CD8-positive, alpha-beta memory T cell (primary cell): ENCODE measurements at regions of chr6 and their contacts with region 1.

Region 1: DNA sequence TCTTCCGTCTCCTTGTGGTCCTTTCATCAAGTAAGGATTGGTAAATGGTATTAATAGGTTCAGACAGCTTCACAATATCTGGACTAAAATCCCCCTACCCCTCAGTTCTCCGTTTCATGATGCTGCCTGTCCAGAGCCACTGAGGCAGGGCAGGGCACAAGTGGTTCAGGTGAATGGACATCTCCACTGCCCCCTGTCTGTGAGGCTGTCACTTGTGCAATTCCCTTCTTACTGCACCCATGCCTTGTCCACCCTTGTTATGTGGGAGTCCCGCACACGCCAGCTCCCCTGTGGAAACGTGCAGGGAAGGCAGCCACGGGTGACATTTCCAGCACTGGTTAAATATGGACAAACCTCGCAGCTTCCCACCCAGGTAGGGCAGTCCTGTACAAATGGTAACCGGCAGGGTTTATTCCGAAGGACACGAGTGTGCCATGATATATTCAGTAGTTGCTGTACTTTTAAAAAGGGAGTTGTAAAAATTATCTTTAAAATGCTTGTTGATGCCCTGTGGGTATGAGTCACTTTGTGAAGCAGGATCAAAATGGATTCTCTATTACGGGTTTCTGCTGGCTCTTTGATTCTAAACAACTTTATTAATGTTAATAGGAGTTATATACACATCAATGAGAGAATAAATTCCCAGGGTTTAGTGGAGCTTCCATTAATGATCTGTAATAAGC is 73.5 kb downstream of the FYN start:
- DNase-seq: no peak
- H3K4me3 ChIP-seq: no peak overlapping the region
- H3K4me3 Mint-ChIP-seq: peak overlapping the region in 3 of 7 donors; percentile 7 to 65 (median 28)
- H3K27ac ChIP-seq: no peak overlapping the region
- H3K27ac Mint-ChIP-seq: peak overlapping the region in 5 of 8 donors; percentile 8 to 79 (median 54)
- H3K4me1 ChIP-seq: peaks cover 56% of the 10 kb centered on the region
- H3K4me1 Mint-ChIP-seq: peaks cover 62 to 92% (median 76%) of the 10 kb centered on the region in 3 donors
- H3K27me3 ChIP-seq: no peaks in the 10 kb centered on the region
- H3K27me3 Mint-ChIP-seq: peaks cover 0 to 2% of the 10 kb centered on the region in 2 donors

Region 2: DNA sequence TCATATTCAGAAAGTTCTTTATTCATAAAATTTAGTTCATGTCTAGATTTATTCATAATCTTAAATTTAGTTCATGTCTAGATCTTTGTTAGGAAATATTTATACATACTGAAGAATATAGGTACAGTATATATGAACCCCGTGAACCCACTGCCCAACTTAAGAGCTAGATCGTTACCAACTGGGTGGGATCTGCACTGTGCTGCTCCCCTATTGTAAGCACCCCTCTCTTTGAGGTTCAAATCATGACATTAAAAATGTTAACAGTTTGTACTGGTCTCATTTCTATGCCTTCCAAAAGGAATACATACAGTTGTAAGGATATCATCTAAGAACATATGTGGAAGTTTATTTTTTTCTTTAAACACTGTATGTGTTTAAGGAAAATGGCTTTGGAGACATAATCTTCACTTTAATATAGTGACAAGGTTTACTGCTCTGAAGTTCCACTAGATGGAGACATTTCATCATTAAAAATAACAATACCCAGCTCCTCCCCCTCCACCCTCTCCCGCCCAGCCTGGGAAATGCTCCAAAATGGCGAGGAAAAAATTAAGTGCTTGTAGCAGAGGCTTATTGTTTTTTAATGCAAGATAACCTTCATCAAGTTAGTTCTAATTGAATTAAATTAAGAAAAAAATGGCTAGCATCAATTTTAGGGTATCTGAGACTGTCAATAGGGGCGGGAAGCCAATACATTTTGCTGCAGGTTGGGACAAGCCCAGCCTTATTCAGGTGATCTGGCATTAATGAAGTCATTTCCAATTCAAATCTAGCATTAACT is 89.9 kb before region 1 on chr6:
- CTCF ChIA-PET with region 1: no interaction called
- POLR2A ChIA-PET with region 1: no interaction called
- DNase-seq: peak; percentile 27 to 76 (median 71)
- H3K4me3 ChIP-seq: no peak overlapping the region
- H3K4me3 Mint-ChIP-seq: peak overlapping the region in 6 of 7 donors; percentile 10 to 79 (median 55)
- H3K27ac ChIP-seq: no peak overlapping the region
- H3K27ac Mint-ChIP-seq: peak overlapping the region; percentile 64 to 99 (median 92)
- H3K4me1 ChIP-seq: peaks cover 55% of the 10 kb centered on the region
- H3K4me1 Mint-ChIP-seq: peaks cover 53 to 78% (median 55%) of the 10 kb centered on the region in 3 donors
- H3K27me3 ChIP-seq: no peaks in the 10 kb centered on the region
- H3K27me3 Mint-ChIP-seq: peaks cover 0 to 3% of the 10 kb centered on the region in 2 donors

Region 3: GRCh38 chr6:111784433-111784832 is 15.3 kb before region 1 on chr6:
- CTCF ChIA-PET with region 1: interaction called, 11 read pairs
- POLR2A ChIA-PET with region 1: no interaction called
- DNase-seq: no peak
- H3K4me3 ChIP-seq: no peak overlapping the region
- H3K4me3 Mint-ChIP-seq: peak overlapping the region in 4 of 7 donors; percentile 16 to 43 (median 36)
- H3K27ac ChIP-seq: no peak overlapping the region
- H3K27ac Mint-ChIP-seq: peak overlapping the region; percentile 73 to 93 (median 84)
- H3K4me1 ChIP-seq: peaks cover 72% of the 10 kb centered on the region
- H3K4me1 Mint-ChIP-seq: peaks cover 59 to 71% (median 64%) of the 10 kb centered on the region in 3 donors
- H3K27me3 ChIP-seq: no peaks in the 10 kb centered on the region
- H3K27me3 Mint-ChIP-seq: no peaks in the 10 kb centered on the region